Esophagus muscularis mucosa (tissue), 4 donors: ENCODE measurements at regions of chr12 and their contacts with region 1.

Region 1: DNA sequence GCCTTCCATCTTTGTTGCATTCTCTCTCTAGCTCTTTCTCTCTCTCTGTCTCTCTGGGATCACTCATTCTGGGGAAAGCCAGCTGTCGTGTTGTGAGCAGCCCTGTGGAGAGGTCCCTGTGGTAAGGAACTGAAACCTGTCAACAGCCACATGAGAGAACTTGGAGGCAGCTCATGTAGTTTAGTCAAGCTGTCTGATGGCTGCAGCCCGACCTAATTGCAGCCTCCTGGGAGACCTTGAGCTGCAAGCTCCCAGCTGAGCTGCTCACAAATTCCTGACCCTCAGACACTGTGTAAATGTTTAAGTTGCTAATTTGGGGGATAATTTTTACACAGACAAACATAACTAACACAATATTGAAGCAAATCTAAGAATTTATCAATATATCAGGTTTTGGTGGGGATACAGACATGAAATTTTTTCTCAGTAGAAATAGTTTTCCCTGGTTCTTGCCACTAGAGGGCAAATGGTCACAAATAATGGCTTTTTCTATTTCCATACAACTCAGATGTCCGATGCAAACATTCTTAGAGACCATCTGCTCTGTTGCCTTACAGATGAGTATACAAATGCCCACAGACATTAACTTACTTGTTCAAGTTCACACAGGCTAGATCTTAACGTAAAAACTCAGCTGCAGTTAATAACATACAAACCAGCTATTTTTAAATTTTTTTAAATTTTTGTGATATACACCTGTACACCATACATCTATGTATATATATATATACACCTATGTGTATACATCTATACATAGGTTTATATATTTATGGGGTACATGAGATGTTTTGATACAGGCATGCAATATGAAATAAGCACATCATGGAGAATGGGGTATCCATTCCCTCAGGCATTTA is 15.5 kb upstream of the KRR1 start:
- DNase-seq: no peak
- H3K4me3 ChIP-seq: no peak overlapping the region
- H3K27ac ChIP-seq: no peak overlapping the region
- H3K4me1 ChIP-seq: peaks cover 0 to 3% (median 0%) of the 10 kb centered on the region in 4 donors
- H3K27me3 ChIP-seq: no peaks in the 10 kb centered on the region
- CTCF ChIP-seq: peak; percentile 67 to 68 (median 68)
- EP300 ChIP-seq: no peak
- POLR2A ChIP-seq: no peak

Region 2: DNA sequence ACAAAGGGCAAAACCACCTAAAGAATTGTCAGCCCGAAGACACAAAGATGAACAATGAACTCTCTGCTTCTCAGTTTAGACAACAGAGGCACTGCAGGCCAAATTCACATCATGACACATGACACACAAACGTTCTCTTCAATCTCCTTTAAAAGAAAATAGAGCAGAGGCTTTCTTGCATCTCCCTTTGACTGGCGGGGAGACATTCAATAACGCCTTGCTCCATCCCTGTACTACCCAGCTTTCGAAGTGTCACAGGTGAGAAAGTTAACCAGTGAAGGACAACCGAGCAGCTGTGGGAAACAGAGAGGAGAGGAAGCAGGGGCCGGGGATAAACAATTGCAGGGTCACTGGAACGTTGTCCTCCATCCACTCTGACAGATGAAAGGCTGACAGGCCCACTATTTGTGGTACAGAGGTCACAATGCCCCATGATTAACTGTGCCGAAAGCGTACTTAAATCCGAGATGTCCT is 373.9 kb after region 1 on chr12:
- intact Hi-C with region 1: no loop called
- DNase-seq: no peak
- H3K4me3 ChIP-seq: no peak overlapping the region
- H3K27ac ChIP-seq: no peak overlapping the region
- H3K4me1 ChIP-seq: no peaks in the 10 kb centered on the region
- H3K27me3 ChIP-seq: no peaks in the 10 kb centered on the region
- CTCF ChIP-seq: no peak
- EP300 ChIP-seq: no peak
- POLR2A ChIP-seq: no peak

Region 3: DNA sequence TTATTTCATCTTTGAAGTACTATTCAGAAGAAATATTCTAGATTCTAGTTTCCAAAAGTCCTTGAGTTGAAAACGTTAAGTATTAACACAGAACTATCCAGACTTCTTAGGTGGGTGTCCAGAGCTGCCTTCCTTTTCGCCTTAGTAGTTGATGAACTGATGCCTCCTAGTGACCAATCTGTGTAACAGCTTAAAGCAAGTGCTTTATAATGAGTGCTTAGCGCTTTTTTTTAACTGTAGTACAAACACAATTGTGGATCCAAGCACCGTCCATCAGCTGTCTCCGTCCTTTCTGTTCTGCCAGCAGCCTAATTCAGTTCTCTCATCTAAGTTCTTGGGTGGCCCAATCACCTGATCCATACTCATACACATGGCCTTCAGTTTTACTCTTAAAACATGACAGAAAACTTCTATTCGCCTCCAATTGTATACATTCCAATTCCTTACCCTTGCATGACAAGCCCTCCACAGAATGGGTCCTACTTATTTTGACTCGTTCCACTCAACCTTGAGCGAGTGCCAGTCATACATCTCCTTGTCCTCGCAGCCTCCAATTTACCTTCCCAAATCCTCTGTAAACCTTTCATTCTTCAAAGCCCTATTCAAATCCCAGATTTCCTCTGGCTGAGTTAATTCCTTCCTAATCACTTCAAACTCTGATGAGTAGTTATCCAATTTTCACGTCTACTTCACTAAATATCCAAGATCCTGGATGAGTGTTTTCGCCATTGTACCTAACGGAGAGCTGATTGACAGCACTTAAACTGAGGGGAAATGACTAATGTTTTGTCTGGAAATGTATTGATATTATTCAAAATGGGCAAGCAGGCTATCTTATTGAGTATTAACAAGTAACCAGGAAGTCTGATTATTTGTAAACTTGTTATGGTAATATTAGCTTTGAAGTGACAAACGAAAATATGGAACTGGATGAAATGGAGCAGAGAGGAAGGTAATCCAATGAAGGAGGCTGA is 510.5 kb after region 1 on chr12:
- intact Hi-C with region 1: loop called (anchors 2 kb)
- DNase-seq: no peak
- H3K4me3 ChIP-seq: no peak overlapping the region
- H3K27ac ChIP-seq: no peak overlapping the region
- H3K4me1 ChIP-seq: peaks cover 0 to 21% (median 16%) of the 10 kb centered on the region in 4 donors
- H3K27me3 ChIP-seq: no peaks in the 10 kb centered on the region
- CTCF ChIP-seq: peak; percentile 72 to 79 (median 79)
- EP300 ChIP-seq: no peak
- POLR2A ChIP-seq: no peak

Region 4: GRCh38 chr12:76356094-76356493 is 829.2 kb after region 1 on chr12:
- intact Hi-C with region 1: loop called (anchors 5 kb)
- DNase-seq: no peak
- H3K4me3 ChIP-seq: no peak overlapping the region
- H3K27ac ChIP-seq: no peak overlapping the region
- H3K4me1 ChIP-seq: no peaks in the 10 kb centered on the region
- H3K27me3 ChIP-seq: no peaks in the 10 kb centered on the region
- CTCF ChIP-seq: no peak
- EP300 ChIP-seq: no peak
- POLR2A ChIP-seq: no peak